ENCODE measurements at regions of chr21 and their contacts with region 1.

Region 1: GRCh38 chr21:25903602-25904001 is 168.8 kb downstream of the GABPA start:
- H3K4me3 Mint-ChIP-seq: peak overlapping the region; percentile 64
- H3K27ac Mint-ChIP-seq: peak overlapping the region; percentile 95
- H3K4me1 Mint-ChIP-seq: peaks cover 37% of the 10 kb centered on the region
- H3K27me3 Mint-ChIP-seq: no peaks in the 10 kb centered on the region

Region 2: GRCh38 chr21:25750085-25750484 is 153.5 kb before region 1 on chr21:
- intact Hi-C with region 1: no loop called
- H3K4me3 Mint-ChIP-seq: no peak overlapping the region
- H3K27ac Mint-ChIP-seq: no peak overlapping the region
- H3K4me1 Mint-ChIP-seq: no peaks in the 10 kb centered on the region
- H3K27me3 Mint-ChIP-seq: no peaks in the 10 kb centered on the region

Region 3: DNA sequence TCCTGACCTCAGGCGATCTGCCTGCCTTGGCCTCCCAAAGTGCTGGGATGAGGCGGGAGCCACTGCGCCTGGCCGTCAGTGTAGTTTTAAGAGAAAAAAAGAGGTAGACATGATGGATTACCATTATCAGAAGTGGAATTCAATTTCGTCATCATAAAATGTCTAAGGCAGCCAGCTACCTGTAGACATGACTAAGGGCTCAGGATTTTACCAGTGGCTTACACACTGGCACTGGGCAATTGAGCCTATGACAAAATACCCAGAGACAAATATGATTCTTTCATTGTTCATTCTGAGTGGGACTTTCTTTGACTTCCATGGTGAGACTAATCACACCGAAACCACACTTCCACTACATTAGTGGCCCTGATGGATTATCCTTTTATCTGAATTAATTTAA is 12.6 kb after region 1 on chr21:
- intact Hi-C with region 1: no loop called
- H3K4me3 Mint-ChIP-seq: no peak overlapping the region
- H3K27ac Mint-ChIP-seq: no peak overlapping the region
- H3K4me1 Mint-ChIP-seq: no peaks in the 10 kb centered on the region
- H3K27me3 Mint-ChIP-seq: no peaks in the 10 kb centered on the region

Region 4: DNA sequence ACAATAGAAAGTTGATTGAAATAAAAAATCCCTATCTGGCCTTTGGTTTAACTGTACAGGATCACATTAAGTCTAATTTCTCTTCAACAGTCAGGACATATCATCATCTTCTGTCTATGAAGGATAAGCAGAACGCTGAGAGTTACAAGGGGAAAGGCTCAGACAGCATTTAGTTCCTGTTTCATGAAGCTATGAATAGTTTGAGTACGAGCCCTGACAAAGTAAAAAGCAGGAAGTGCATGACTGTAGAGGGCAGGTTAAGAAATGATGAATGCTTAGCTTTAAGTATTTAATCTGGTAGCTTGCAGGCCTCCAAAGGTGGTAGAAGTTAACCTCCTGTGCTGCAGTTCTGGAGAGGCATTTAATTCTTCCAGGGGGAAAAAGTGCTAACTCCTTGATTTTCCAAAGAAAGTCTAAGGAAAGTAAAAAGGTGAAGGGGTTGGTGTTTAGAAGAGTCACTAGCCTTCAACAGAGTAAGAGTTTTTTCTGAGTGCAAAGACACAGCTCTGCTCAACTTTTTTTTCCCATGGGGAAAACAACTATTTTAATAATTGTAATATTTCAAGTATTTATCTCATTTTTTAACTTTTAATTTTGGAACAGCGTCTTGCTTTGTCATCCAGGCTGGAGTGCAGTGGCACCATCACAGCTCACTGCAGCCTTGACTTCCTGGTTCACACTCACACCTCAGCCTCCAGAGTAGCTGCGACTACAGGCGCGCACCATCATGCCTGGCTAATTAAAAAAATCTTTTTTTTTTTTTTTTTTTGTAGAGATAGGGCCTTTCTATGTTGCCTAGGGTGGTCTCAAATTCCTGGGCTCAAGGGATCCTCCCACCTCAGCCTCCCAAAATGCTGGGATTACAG is 64.2 kb after region 1 on chr21:
- intact Hi-C with region 1: loop called (anchors 2 kb)
- H3K4me3 Mint-ChIP-seq: no peak overlapping the region
- H3K27ac Mint-ChIP-seq: peak overlapping the region; percentile 66
- H3K4me1 Mint-ChIP-seq: peaks cover 28% of the 10 kb centered on the region
- H3K27me3 Mint-ChIP-seq: no peaks in the 10 kb centered on the region

Region 5: DNA sequence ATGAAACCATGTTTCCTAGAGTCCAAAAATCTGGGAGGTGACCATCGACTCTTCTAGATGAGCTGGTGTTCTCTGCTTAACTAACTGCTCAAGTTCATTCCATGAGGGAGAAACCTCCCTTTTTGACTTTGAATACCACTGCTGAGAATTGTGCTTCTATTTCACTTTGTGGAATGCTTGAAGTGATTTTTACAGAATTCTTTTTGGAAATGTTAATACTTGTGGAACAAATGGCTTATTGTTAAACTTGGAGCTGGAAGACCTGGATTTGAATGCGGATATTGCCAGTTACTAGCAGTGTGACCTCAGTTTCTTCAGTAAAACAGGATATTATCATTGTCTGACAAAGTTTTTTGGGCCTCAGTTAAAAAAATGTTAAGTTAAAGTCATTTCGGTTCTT is 303.4 kb after region 1 on chr21:
- intact Hi-C with region 1: no loop called
- H3K4me3 Mint-ChIP-seq: no peak overlapping the region
- H3K27ac Mint-ChIP-seq: no peak overlapping the region
- H3K4me1 Mint-ChIP-seq: no peaks in the 10 kb centered on the region
- H3K27me3 Mint-ChIP-seq: no peaks in the 10 kb centered on the region